ENCODE measurements at regions of chr3 and their contacts with region 1.

Region 1: GRCh38 chr3:4741404-4742307 is 237.6 kb upstream of the BHLHE40 start:
- DNase-seq: peak; percentile 77 to 79
- ATAC-seq: peak; percentile 92
- H3K4me3 ChIP-seq: no peak overlapping the region
- H3K27ac ChIP-seq: peak overlapping the region; percentile 72 to 94
- H3K4me1 ChIP-seq: peaks cover 0 to 5% of the 10 kb centered on the region in 2 donors
- H3K27me3 ChIP-seq: no peaks in the 10 kb centered on the region

Region 2: DNA sequence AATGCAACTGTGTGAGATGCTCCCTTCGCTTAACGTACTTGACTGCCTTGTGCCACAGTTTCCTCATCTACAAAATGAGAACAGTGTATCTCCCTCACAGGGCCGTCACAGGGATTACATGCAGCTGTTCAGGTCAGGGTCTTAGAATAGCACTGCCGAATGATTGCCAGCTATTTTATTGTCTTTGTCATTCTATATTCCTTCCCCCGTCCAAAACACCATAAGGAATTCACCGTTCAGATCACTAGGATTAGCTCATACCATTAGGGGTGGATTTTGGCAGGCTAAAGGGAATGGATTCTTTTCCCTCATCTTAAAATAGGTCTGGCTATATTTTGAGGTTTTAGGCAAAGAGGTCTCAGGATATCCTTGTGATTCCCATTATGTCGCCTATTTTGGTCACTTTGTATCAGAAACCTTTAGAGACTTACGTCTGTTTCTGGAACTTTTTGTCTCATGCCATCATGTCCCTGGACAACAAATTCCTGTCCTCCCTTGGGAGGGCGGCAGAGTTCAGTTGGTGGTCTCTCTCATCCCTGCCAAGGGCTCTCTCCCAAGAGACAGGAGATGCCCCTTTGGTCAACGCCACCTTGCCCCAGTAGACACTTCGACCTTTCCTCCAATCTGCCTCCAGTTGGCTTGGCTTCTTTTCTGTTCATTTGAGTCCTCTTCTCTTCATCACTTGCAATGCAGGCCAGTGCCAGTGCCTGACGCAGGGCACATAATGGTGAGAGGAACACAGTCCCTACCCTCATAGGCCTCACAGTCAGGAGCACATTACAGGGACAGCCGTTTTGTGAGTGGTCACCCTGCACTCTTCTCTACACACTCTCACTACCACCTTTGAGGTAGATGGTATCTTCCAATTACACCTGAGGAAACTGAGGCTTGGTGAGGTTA is 66.0 kb after region 1 on chr3:
- intact Hi-C with region 1: loop called in 1 of 2 experiments (anchors 5 kb)
- DNase-seq: no peak
- ATAC-seq: peak; percentile 35
- H3K4me3 ChIP-seq: no peak overlapping the region
- H3K27ac ChIP-seq: peak overlapping the region; percentile 24 to 83
- H3K4me1 ChIP-seq: peaks cover 2 to 6% of the 10 kb centered on the region in 2 donors
- H3K27me3 ChIP-seq: no peaks in the 10 kb centered on the region